Posterior vena cava (tissue), 2 donors: ENCODE measurements at regions of chr20 and their contacts with region 1.

Region 1: DNA sequence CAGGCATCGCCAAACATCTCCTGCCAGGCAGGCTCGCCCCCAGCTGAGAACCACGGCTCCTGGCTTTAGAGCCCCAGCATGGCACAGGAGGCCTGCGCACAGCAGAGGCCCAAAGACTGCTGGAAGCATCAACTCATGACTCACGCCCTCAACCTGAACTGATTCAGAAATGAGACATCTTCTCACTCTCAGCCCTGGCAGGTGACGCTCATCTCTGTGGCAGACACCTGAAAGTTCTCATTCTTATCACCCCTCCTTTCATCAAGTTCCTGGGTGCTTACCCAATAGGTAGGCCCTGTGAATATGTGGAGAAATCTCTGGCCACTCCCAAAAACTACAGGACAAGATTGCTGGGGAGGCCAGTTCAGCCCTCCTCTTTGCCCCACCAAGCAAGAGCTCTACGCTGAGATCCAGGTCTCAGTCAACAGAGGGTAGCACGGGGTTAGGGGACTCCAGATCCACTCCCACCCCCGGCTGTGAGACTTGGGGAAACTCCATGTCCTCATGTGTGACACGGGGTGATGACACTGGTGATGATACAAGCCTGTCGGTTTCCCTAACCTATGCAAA is 11.3 kb downstream of the NFATC2 start:
- DNase-seq: no peak

Region 2: DNA sequence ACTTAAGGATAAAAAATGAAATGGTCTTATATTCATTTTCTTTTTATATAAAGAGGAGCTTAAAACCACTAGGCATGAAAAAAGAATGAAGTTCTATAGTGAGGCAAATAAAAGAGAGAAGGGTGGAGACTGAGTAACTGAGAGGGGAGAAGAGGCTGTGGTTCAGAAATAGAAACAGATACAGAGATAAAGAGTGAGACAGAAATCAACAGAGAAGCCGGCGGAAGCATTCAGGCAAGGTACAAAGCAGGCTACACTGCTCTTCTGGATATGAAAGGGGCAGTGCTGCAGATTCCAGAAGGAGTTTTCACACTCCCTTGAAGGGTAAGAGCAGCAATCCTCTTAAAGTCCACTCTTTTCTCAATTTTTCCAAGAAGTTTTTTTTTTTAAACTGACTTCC is 18.6 kb before region 1 on chr20:
- intact Hi-C with region 1: no loop called
- DNase-seq: no peak

Region 3: GRCh38 chr20:51549474-51549873 is 18.2 kb after region 1 on chr20:
- intact Hi-C with region 1: loop called in 1 of 2 experiments (anchors 1 kb)
- DNase-seq: no peak